MCF 10A (cell line): ENCODE measurements at regions of chr5 and their contacts with region 1.

Region 1: DNA sequence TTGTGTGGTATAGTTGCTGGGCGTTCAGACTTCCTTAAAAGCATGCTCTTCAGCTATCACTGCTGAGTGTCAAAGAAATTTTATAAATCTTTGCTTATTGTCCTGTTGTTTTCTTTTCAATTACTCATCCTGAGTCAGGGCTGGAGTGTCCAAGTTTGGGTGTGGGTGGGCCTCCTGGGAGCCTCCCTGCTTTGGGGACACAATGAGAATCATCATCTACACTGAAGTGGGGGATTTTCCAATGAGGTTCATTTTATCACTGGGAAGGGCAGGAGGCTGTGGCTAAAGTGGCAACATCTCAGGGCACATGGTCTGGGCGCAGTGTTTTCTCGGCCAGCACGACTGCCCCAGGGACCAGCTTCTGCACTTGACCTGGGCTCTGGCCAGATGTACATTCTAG is 19.5 kb downstream of the GFPT2 start:
- DNase-seq: peak; percentile 96
- H3K4me3 Mint-ChIP-seq: peak overlapping the region; percentile 22
- H3K27ac Mint-ChIP-seq: peak overlapping the region; percentile 85
- H3K4me1 Mint-ChIP-seq: peaks cover 34% of the 10 kb centered on the region
- H3K27me3 Mint-ChIP-seq: no peaks in the 10 kb centered on the region
- CTCF ChIP-seq: no peak

Region 2: DNA sequence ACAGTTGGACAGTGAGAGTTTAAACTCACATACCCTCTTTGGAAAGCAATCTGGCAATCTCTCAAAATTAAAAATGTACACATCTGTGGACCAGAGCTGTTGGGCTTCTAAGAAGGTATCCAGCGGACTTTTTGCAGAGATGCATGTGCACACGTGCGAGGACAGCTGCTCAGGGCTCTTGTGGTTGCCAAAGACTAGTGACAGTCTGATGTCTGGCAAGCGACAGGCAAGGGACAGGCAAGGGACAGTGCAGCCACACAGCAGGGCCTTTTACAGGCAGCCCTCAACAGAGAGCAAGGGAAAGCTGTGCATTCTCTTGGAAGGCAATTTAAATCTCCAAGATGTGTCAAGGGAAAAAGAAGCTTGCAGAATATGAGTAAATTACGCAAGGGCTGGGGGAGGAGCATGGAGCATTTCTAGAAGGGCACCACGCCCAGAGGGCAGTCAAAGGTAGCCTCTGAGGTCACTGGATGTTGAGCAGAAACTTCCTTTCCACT is 10.2 kb after region 1 on chr5:
- CTCF ChIA-PET with region 1: interaction called, 28 read pairs
- POLR2A ChIA-PET with region 1: interaction called, 12 read pairs
- intact Hi-C with region 1: no loop called
- DNase-seq: peak; percentile 92
- H3K4me3 Mint-ChIP-seq: no peak overlapping the region
- H3K27ac Mint-ChIP-seq: no peak overlapping the region
- H3K4me1 Mint-ChIP-seq: peaks cover 8% of the 10 kb centered on the region
- H3K27me3 Mint-ChIP-seq: no peaks in the 10 kb centered on the region
- CTCF ChIP-seq: no peak